B cell (primary cell): ENCODE measurements at regions of chr5 and their contacts with region 1.

Region 1: DNA sequence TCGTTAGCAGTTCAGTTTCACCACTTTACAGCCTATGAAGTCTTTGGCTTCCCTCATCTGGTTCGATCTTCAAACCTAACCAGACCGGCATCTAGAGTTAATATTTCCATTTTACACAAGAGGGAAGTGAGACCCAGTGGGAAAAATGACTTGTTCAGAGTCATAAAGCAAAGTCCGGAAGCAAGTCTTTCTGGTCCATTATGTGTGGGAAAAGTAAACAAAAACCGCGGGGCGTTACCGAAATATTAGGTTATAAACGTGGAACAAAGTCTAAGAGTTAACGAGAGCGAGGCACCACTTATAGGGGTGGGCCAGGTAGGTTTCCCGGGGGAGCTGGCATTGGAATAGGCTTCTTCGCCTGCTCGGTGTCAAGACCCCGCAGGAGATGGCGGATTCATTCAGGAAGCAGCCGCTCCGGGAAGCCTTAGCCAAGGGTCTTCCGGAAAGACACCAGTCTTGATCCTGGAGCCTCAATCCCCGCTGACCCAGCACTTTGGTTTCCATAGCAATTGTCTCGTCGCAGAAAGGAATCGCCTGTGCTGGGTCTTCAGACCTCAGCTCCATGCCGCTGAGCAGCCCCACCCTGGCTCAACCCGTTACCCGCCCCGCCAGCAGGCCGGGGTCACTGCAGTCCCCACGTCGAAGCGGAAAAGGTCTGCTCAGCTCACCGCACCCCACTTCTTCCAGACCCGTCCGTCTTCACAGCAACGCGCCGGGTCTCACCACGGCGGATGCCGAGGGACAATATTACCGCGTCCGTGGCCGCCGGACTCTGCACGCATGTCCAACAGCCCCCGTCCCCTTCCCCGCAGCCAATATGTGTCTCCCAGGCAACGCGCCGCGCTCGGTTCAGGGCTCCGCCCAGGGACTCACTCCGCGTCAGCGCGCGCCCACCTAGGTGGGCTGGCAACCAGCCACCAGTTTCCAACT is at the start of gene C5orf52:
- DNase-seq: peak; percentile 49
- ATAC-seq: peak; percentile 51
- H3K4me3 ChIP-seq: peak within 1 kb of the TSS; percentile 52 to 76 (median 72)
- H3K4me3 Mint-ChIP-seq: peak within 1 kb of the TSS; percentile 98
- H3K27ac ChIP-seq: peak within 1 kb of the TSS in 1 of 2 donors; percentile 17
- H3K27ac Mint-ChIP-seq: peak within 1 kb of the TSS; percentile 83
- H3K4me1 ChIP-seq: peaks cover 13 to 29% of the 10 kb centered on the region in 2 donors
- H3K4me1 Mint-ChIP-seq: peaks cover 29% of the 10 kb centered on the region
- H3K27me3 ChIP-seq: no peaks in the 10 kb centered on the region
- H3K27me3 Mint-ChIP-seq: no peaks in the 10 kb centered on the region
- CTCF ChIP-seq: no peak
- total RNA-seq, gene C5orf52: not detected in 2 replicates

Region 2: DNA sequence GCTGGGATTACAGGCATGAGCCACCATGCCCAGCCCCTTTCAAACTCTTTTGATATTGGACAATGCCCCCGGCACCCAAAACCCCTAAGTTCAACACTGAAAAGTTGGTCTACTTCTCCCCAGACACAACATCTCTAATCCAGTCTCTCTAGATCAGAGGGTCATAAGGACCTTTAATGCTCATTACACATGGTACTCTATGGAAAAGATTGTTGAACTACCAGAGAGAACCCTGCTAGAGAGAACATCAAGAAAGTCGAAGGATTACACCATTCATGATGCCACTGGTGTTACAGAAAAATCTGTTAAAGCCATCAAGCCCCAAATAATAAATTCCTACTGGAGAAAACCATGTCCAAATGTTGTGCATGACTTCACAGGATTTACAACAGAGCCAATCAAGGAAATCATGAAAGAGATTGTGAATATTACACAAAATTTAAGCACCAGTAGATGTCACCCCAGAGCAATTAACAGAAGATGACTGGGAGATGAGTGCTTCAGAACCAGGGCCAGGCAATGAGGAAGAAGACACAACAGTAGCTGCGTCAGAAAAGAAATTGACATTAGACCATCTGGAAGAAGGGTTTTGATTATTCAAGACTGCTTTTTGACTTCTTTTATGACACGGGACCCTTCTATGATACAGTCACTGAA is 239.3 kb before region 1 on chr5:
- CTCF ChIA-PET with region 1: interaction called, 4 read pairs
- POLR2A ChIA-PET with region 1: no interaction called
- intact Hi-C with region 1: loop called (anchors 5 kb)
- DNase-seq: peak; percentile 84
- ATAC-seq: peak; percentile 100
- H3K4me3 ChIP-seq: peak overlapping the region in 1 of 5 experiments; percentile 30
- H3K4me3 Mint-ChIP-seq: peak overlapping the region; percentile 40
- H3K27ac ChIP-seq: peak overlapping the region; percentile 28 to 67
- H3K27ac Mint-ChIP-seq: peak overlapping the region; percentile 88
- H3K4me1 ChIP-seq: peaks cover 8 to 11% of the 10 kb centered on the region in 2 donors
- H3K4me1 Mint-ChIP-seq: peaks cover 18% of the 10 kb centered on the region
- H3K27me3 ChIP-seq: no peaks in the 10 kb centered on the region
- H3K27me3 Mint-ChIP-seq: no peaks in the 10 kb centered on the region
- CTCF ChIP-seq: peak; percentile 76

Region 3: GRCh38 chr5:157651623-157652549 is 19.0 kb before region 1 on chr5 and contains the start of gene SOX30:
- CTCF ChIA-PET with region 1: interaction called, 12 read pairs
- POLR2A ChIA-PET with region 1: no interaction called
- intact Hi-C with region 1: no loop called
- DNase-seq: peak; percentile 92
- ATAC-seq: peak; percentile 97
- H3K4me3 ChIP-seq: peak within 1 kb of the TSS in 4 of 5 experiments; percentile 46 to 60 (median 58)
- H3K4me3 Mint-ChIP-seq: peak within 1 kb of the TSS; percentile 89
- H3K27ac ChIP-seq: peak within 1 kb of the TSS; percentile 67 to 77
- H3K27ac Mint-ChIP-seq: peak within 1 kb of the TSS; percentile 90
- H3K4me1 ChIP-seq: peaks cover 34 to 36% of the 10 kb centered on the region in 2 donors
- H3K4me1 Mint-ChIP-seq: peaks cover 42% of the 10 kb centered on the region
- H3K27me3 ChIP-seq: no peaks in the 10 kb centered on the region
- H3K27me3 Mint-ChIP-seq: no peaks in the 10 kb centered on the region
- CTCF ChIP-seq: peak; percentile 59
- total RNA-seq, gene SOX30: 0.29 and 0.49 TPM in 2 replicates

Region 4: DNA sequence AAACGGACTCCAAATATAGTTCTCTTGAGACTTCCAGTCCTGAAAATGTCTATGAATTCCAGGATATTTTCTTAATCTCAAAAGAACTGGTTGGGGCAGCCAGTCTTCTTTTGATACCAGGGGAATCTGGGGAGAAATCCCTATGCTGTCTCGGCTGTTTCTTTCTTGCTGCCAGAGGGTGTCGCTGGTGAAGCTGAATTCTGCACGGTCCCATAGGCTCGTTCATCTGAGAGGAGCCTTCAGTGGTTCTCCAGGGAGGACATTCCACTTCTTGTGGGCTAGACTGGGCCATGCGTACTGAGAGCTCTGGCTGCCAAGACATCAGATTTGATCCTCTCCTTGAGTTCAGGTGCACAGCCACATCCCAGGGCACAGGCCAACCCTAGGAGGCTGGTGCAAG is 343.0 kb after region 1 on chr5:
- CTCF ChIA-PET with region 1: no interaction called
- POLR2A ChIA-PET with region 1: no interaction called
- intact Hi-C with region 1: no loop called
- DNase-seq: peak; percentile 4
- ATAC-seq: no peak
- H3K4me3 ChIP-seq: no peak overlapping the region
- H3K4me3 Mint-ChIP-seq: no peak overlapping the region
- H3K27ac ChIP-seq: no peak overlapping the region
- H3K27ac Mint-ChIP-seq: no peak overlapping the region
- H3K4me1 ChIP-seq: no peaks in the 10 kb centered on the region
- H3K4me1 Mint-ChIP-seq: no peaks in the 10 kb centered on the region
- H3K27me3 ChIP-seq: peaks cover 0 to 3% (median 0%) of the 10 kb centered on the region in 4 experiments
- H3K27me3 Mint-ChIP-seq: peaks cover 17% of the 10 kb centered on the region
- CTCF ChIP-seq: no peak